ENCODE measurements at regions of chr12 and their contacts with region 1.

Region 1: GRCh38 chr12:32365473-32366064 is 33.8 kb upstream of the FGD4 start:
- DNase-seq: peak in 1 of 2 donors; percentile 69
- ATAC-seq: peak in 2 of 3 donors; percentile 74
- H3K4me3 ChIP-seq: no peak overlapping the region
- H3K4me3 Mint-ChIP-seq: no peak overlapping the region
- H3K27ac ChIP-seq: no peak overlapping the region
- H3K27ac Mint-ChIP-seq: no peak overlapping the region
- H3K4me1 ChIP-seq: no peaks in the 10 kb centered on the region
- H3K4me1 Mint-ChIP-seq: no peaks in the 10 kb centered on the region
- H3K27me3 ChIP-seq: no peaks in the 10 kb centered on the region
- H3K27me3 Mint-ChIP-seq: no peaks in the 10 kb centered on the region
- CTCF ChIP-seq: peak; percentile 68

Region 2: GRCh38 chr12:32671930-32672780 is 306.6 kb after region 1 on chr12:
- intact Hi-C with region 1: loop called (anchors 5 kb)
- DNase-seq: peak in 1 of 2 donors; percentile 46
- ATAC-seq: peak in 1 of 3 donors; percentile 52
- H3K4me3 ChIP-seq: no peak overlapping the region
- H3K4me3 Mint-ChIP-seq: no peak overlapping the region
- H3K27ac ChIP-seq: no peak overlapping the region
- H3K27ac Mint-ChIP-seq: no peak overlapping the region
- H3K4me1 ChIP-seq: no peaks in the 10 kb centered on the region
- H3K4me1 Mint-ChIP-seq: no peaks in the 10 kb centered on the region
- H3K27me3 ChIP-seq: no peaks in the 10 kb centered on the region
- H3K27me3 Mint-ChIP-seq: peaks cover 0 to 4% of the 10 kb centered on the region in 2 donors
- CTCF ChIP-seq: no peak

Measured in natural killer cell (primary cell).